Activated CD4-positive, alpha-beta T cell treated with anti-CD3 and anti-CD28 coated beads for 36 hours (primary cell): ENCODE measurements at regions of chr14 and their contacts with region 1.

Region 1: DNA sequence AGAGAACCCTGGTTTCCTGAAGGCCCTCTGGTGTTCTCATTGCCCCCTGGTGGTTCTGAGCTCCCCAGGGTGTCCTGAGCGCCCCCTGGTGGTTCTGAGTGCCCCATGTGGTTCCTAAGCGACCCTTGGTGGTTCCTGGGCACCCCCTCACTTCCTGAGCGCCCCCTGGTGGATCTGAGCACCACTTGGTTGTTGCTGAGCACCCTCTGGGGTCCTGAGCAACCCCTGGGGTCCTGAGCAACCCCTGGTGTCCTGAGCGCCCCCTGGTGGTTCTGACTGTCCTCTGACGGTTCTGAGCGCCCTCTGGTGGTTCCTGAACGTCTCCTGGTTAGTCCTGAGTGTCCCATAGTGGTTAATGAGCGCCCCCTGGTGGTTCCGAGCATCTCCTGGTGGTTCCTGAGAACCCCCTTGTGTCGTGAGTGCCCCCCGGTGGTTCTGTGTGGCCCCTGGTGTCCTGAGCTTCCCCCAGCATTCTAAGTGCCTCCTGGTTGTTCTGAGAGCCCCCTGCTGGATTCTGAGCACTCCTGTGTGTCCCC is 568.3 kb downstream of the TMEM121 start:
- DNase-seq: peak; percentile 94
- ATAC-seq: peak; percentile 96
- H3K4me3 Mint-ChIP-seq: no peak overlapping the region
- H3K27ac Mint-ChIP-seq: no peak overlapping the region
- H3K4me1 Mint-ChIP-seq: no peaks in the 10 kb centered on the region
- H3K27me3 Mint-ChIP-seq: peaks cover 3% of the 10 kb centered on the region

Region 2: DNA sequence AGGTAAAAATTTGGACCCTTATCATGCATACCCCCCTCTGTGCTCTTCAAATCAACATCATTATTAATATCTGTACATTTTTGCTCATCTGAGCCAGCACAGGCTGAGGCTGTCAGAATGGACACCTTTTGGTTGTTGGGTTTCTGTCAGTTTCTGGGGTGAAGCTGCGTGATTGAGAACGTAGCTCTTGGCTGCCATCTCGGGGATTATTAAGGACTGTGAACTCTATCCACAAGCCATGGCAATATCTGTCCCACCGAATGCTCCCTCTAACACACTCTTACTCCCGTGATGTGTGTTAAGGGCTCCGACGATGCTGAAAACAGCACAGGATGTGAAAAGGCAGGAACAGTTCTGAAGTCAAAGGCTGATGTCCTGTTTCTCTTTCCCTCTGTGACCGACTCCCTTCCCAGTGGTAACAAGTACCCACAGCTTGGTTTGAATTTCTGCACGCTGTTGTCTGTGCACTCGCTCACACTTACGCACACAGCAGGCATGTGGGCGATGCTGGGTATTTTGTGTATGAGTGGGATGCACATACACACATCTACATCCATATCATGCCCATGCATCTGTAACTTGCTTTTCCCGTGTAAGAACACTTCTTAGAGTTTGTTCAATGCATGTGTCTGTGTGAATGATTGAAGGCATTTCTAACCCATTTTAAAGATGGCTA is 162.8 kb before region 1 on chr14:
- CTCF ChIA-PET with region 1: no interaction called
- POLR2A ChIA-PET with region 1: no interaction called
- intact Hi-C with region 1: no loop called
- DNase-seq: no peak
- ATAC-seq: no peak
- H3K4me3 Mint-ChIP-seq: no peak overlapping the region
- H3K27ac Mint-ChIP-seq: no peak overlapping the region
- H3K4me1 Mint-ChIP-seq: no peaks in the 10 kb centered on the region
- H3K27me3 Mint-ChIP-seq: peaks cover 25% of the 10 kb centered on the region

Region 3: GRCh38 chr14:105989566-105990302 is 105.0 kb before region 1 on chr14:
- CTCF ChIA-PET with region 1: no interaction called
- POLR2A ChIA-PET with region 1: no interaction called
- intact Hi-C with region 1: no loop called
- DNase-seq: peak; percentile 75
- ATAC-seq: peak; percentile 67
- H3K4me3 Mint-ChIP-seq: no peak overlapping the region
- H3K27ac Mint-ChIP-seq: peak overlapping the region; percentile 85
- H3K4me1 Mint-ChIP-seq: peaks cover 58% of the 10 kb centered on the region
- H3K27me3 Mint-ChIP-seq: no peaks in the 10 kb centered on the region

Region 4: DNA sequence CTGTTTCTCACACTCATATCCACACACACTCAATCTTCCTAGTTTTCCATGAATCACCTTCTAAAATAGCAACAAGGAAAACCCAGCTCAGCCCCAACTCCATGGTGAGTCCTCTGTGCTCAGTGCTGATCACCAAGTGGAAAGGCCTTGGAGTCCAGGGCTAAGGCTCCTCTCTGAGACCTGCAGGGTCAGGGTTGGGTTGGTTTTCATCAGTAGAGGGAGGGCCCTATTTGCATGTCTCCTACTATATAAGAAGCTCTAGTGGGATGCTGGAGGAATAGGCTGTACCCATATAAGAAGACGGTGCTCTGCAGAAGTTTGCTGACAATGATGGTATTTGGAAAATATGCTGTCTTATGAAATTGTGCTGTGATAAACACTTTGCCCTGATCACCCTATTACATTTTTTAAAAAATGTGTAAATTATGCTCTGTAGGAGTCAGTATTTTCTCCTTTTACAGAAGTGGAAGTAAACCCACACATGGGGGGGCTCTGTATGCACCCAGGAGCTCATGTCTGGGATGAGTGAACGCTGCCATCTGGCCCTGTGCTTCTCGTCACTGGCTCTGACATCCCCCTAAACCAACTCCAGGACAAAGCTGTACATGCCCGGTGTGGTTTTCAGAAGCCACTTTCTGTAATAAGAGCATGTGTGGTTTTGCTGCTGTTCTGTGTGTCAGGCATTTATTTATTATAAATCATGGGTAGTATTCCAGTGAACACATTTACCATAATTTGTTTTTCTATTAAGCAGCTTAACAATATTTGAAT is 32.0 kb before region 1 on chr14:
- CTCF ChIA-PET with region 1: interaction called, 12 read pairs
- POLR2A ChIA-PET with region 1: no interaction called
- intact Hi-C with region 1: no loop called
- DNase-seq: no peak
- ATAC-seq: no peak
- H3K4me3 Mint-ChIP-seq: no peak overlapping the region
- H3K27ac Mint-ChIP-seq: no peak overlapping the region
- H3K4me1 Mint-ChIP-seq: peaks cover 30% of the 10 kb centered on the region
- H3K27me3 Mint-ChIP-seq: peaks cover 10% of the 10 kb centered on the region

Region 5: GRCh38 chr14:106080924-106081323 is 13.8 kb before region 1 on chr14:
- CTCF ChIA-PET with region 1: interaction called, 10 read pairs
- POLR2A ChIA-PET with region 1: no interaction called
- intact Hi-C with region 1: no loop called
- DNase-seq: no peak
- ATAC-seq: no peak
- H3K4me3 Mint-ChIP-seq: no peak overlapping the region
- H3K27ac Mint-ChIP-seq: no peak overlapping the region
- H3K4me1 Mint-ChIP-seq: no peaks in the 10 kb centered on the region
- H3K27me3 Mint-ChIP-seq: peaks cover 14% of the 10 kb centered on the region